ENCODE measurements at regions of chr12 and their contacts with region 1.

Region 1: DNA sequence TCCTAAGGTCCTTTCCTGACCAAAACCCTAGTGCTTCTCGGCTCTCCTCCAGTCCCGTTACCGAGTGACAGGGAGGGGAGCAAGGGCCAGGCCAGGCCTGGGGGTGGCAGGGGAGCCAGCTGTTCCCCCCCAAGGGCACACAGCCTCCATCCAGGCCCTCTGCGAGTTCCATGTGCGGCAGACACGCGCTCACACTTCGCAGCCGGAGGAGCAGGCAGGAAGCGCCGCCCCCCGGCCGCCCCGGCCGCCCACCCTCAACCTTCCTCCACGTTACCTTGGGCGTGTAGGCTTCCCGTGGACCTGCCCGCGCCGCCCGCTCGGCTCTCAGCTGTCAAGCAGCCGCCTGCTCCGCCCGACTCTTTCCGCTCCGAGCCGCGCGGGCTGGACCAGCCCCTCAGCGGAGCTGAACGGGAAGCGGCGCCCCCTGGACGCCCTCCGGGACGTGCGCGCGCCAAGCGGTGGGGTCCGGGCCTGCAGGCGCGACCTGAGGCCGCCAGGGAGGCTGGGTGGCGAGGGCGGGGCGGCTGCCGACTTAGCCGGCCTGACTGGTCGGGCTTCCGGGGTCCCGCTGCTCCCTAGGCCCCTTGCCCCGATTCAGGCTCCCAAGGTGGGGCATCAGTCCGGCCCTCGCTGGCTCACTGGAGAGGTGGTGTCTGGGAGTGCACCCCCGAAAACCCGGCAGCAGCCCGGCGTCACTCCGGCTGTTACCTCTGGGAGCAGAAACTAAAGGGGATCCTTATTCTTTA is at the start of gene CRACR2A:
- DNase-seq: peak; percentile 80 to 93 (median 87)
- H3K4me3 ChIP-seq: peak within 1 kb of the TSS; percentile 93
- H3K4me3 Mint-ChIP-seq: peak within 1 kb of the TSS; percentile 85 to 99 (median 94)
- H3K27ac ChIP-seq: peak within 1 kb of the TSS; percentile 97
- H3K27ac Mint-ChIP-seq: peak within 1 kb of the TSS; percentile 95 to 100 (median 98)
- H3K4me1 ChIP-seq: peaks cover 46% of the 10 kb centered on the region
- H3K4me1 Mint-ChIP-seq: peaks cover 58 to 73% (median 68%) of the 10 kb centered on the region in 3 donors
- H3K27me3 ChIP-seq: no peaks in the 10 kb centered on the region
- H3K27me3 Mint-ChIP-seq: no peaks in the 10 kb centered on the region
- total RNA-seq, gene CRACR2A: 27.3 to 27.9 TPM

Region 2: GRCh38 chr12:3727877-3728632 is 24.9 kb before region 1 on chr12:
- CTCF ChIA-PET with region 1: interaction called, 7 read pairs
- POLR2A ChIA-PET with region 1: interaction called, 10 read pairs
- DNase-seq: peak; percentile 40 to 73 (median 41)
- H3K4me3 ChIP-seq: peak overlapping the region; percentile 19
- H3K4me3 Mint-ChIP-seq: peak overlapping the region; percentile 64 to 85 (median 81)
- H3K27ac ChIP-seq: peak overlapping the region; percentile 73
- H3K27ac Mint-ChIP-seq: peak overlapping the region; percentile 73 to 99 (median 96)
- H3K4me1 ChIP-seq: peaks cover 27% of the 10 kb centered on the region
- H3K4me1 Mint-ChIP-seq: peaks cover 45 to 57% (median 46%) of the 10 kb centered on the region in 3 donors
- H3K27me3 ChIP-seq: no peaks in the 10 kb centered on the region
- H3K27me3 Mint-ChIP-seq: no peaks in the 10 kb centered on the region

Region 3: GRCh38 chr12:3741882-3742672 is 10.8 kb before region 1 on chr12:
- CTCF ChIA-PET with region 1: interaction called, 19 read pairs
- POLR2A ChIA-PET with region 1: interaction called, 3 read pairs
- DNase-seq: no peak
- H3K4me3 ChIP-seq: no peak overlapping the region
- H3K4me3 Mint-ChIP-seq: no peak overlapping the region
- H3K27ac ChIP-seq: no peak overlapping the region
- H3K27ac Mint-ChIP-seq: peak overlapping the region in 3 of 8 donors; percentile 41 to 88 (median 56)
- H3K4me1 ChIP-seq: peaks cover 14% of the 10 kb centered on the region
- H3K4me1 Mint-ChIP-seq: peaks cover 34 to 64% (median 55%) of the 10 kb centered on the region in 3 donors
- H3K27me3 ChIP-seq: no peaks in the 10 kb centered on the region
- H3K27me3 Mint-ChIP-seq: no peaks in the 10 kb centered on the region

Measured in CD8-positive, alpha-beta memory T cell (primary cell).